ENCODE measurements at regions of chr10 and their contacts with region 1.

Region 1: DNA sequence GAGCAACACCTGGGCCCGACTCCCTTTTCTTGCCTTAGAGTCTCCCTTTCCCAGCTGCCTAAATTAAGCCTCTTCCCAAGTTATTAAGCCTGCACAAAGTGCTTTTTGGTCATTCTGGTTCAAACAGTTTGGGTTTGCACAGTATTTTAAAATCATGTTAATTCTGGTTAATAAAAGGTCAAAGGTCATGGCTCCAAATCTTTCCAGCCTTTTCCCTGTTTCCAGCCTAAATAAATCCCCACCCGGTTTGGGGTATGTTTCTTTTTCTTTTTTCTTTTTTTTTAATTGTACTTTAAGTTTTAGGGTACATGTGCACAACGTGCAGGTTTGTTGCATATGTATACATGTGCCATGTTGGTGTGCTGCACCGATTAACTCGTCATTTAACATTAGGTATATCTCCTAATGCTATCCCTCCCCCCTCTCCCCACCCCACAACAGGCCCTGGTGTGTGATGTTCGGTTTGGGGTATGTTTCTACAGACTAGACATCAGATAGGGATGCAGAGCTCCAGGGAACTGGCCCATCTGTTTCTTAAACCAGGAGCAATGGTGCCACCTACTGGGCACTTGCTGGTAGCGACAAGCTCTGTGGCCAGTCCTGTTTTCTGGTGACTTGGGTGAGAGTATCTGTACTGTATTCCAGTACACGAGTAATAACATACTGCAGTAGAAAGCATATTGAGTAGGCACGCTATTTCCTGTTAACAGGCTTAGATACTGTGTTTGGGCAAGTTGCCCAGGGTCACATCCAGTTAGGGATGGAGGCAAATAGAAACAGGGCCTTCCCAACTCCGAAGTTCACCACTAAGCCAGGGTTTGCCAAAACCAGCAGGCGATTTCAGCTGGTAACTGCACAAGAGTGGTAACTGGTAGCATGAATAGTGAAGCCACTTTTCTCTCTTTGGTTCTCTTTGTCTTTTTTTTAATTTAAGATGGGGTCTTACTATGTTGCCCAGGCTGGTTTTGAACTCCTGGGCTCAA is 60.6 kb upstream of the TRIM8 start:
- DNase-seq: peak; percentile 49
- H3K4me3 ChIP-seq: no peak overlapping the region
- CTCF ChIP-seq: peak; percentile 81

Region 2: GRCh38 chr10:102420810-102421644 is 162.7 kb before region 1 on chr10 and contains the start of gene FBXL15:
- CTCF ChIA-PET with region 1: interaction called, 27 read pairs
- POLR2A ChIA-PET with region 1: no interaction called
- DNase-seq: peak; percentile 71
- H3K4me3 ChIP-seq: peak within 1 kb of the TSS; percentile 92
- CTCF ChIP-seq: no peak

Region 3: DNA sequence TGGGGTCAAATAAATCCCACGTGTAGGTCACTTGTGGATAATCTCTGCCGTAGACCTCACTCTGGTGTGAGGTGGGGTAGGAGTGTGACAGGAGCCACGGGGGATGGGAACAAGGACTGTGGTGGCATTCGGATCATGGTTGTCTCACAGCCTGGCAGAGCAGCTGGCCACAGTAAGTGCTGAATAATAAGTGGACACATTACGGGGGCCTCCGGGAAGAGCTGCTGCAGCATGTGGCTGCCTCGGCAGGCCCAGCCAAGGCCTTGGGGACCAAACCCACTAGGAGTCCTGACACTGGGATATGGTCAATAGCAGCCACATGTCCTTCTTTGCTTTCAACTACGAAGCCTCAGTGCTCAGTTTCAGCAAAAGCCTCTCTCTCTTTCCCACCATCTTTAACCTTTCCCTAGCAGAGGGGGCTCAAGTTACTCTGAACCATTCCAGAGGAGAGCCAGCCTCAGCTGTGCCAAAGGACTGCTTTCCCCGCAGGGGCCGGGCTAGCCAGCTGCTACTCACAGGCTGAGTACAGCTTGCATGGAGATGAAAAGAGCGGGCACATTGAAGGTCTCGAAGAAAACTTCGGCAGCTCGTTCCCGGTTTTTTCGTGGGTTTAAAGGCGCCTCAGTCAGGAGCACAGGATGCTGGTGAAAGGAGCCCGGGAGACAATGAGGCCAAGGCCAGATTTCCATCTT is 98.5 kb before region 1 on chr10:
- CTCF ChIA-PET with region 1: interaction called, 36 read pairs
- POLR2A ChIA-PET with region 1: no interaction called
- DNase-seq: no peak
- H3K4me3 ChIP-seq: no peak overlapping the region
- CTCF ChIP-seq: no peak

Region 4: GRCh38 chr10:102503281-102504220 is 80.2 kb before region 1 on chr10 and contains the start of gene SUFU:
- CTCF ChIA-PET with region 1: interaction called, 300 read pairs
- POLR2A ChIA-PET with region 1: interaction called, 8 read pairs
- DNase-seq: peak; percentile 90
- H3K4me3 ChIP-seq: peak within 1 kb of the TSS; percentile 96
- CTCF ChIP-seq: peak; percentile 86

Region 5: DNA sequence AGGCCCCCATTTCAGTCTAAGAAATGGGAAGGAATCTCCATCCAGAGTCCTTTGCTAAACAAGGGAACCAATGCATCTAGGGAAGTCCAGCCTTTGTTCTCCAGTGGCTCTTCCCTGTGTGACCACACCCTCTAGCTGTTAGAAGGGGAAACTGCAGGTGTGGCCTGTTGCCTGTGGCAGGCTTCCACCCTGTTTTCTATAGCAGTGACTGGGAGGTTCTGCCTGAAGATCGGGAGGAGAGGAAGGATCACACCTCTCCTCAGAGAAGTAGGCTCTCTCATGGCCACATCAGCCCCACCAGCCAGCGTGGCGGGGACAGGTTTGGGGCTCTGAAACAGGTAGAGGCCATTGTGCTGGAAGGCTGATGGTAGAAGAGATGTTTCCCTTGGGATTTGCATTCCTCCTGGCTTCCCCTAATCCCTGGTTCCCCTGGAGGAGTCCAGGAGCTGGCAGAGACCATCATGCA is 12.8 kb after region 1 on chr10:
- CTCF ChIA-PET with region 1: interaction called, 94 read pairs
- POLR2A ChIA-PET with region 1: interaction called, 3 read pairs
- DNase-seq: no peak
- H3K4me3 ChIP-seq: no peak overlapping the region
- CTCF ChIP-seq: peak; percentile 74

Region 6: DNA sequence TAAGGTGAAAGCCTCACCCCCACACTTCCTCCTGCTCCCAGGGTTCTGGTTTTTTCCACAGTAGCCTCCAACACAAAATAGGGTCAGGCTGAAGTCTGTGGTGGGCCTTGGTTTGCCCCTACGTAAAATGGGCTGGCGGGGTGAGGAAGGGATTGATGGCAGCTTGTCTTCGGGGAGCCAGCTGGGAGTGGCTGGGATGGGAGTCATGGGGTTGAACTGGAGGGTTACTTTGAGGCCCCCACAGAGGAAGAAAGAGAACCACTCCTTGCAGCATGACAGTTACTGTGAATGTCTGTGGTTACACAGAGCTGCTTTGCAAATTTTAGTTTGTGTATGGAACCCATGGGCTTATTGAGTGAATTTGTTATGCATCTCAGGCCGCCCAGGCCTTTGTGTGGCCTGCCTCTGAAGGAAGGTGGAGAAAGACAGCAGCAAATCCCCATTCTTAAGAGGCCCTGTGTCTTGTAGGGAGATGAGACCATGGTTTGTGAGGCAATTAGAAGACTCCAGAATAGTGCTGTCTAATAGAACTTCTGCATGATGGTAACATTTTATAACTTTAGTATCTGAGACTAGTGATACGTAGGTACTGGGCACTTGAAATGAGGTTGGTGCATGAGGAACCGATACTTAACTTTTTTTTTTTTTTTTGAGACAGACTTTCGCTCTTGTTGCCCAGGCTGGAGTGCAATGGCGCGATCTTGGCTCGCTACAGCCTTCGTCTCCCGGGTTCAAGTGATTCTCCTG is 68.6 kb after region 1 on chr10:
- CTCF ChIA-PET with region 1: no interaction called
- POLR2A ChIA-PET with region 1: no interaction called
- DNase-seq: no peak
- H3K4me3 ChIP-seq: no peak overlapping the region
- CTCF ChIP-seq: no peak